ENCODE measurements at regions of chr13 and their contacts with region 1.

Region 1: DNA sequence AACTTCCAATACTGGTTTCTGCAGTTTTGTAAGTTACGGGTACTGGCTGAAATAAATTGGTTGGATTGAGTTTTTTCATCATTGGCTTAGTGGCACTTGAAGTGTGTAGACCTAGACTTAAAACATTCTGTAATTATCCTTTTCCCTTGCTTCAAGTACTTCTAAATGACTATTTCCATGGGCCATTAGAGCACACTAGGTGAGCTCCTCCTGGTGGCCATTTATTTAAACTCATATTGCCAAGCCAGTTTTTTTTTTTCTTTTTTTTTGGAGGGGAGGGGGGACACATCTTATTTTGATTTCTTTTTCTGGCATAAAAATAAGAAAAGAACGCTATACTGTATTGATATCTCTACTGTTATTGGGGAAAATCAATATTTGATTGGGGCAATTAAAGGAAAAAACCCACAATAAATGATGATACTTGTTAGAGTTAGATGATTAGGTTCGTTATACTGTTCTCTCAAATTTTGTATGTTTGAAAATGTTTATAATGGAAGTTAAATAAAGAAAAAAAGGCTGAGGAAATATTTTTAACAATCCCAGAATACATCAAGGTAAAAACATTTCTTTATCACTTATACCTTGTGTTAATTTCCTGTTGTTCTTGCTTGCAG is 82.9 kb downstream of the PDS5B start:
- DNase-seq: peak; percentile 75 to 86 (median 83)
- H3K4me3 ChIP-seq: no peak overlapping the region
- H3K27ac ChIP-seq: no peak overlapping the region
- H3K4me1 ChIP-seq: no peaks in the 10 kb centered on the region
- H3K27me3 ChIP-seq: no peaks in the 10 kb centered on the region

Region 2: GRCh38 chr13:32075170-32075851 is 593.8 kb before region 1 on chr13:
- CTCF ChIA-PET with region 1: no interaction called
- POLR2A ChIA-PET with region 1: no interaction called
- DNase-seq: no peak
- H3K4me3 ChIP-seq: no peak overlapping the region
- H3K27ac ChIP-seq: no peak overlapping the region
- H3K4me1 ChIP-seq: peaks cover 0 to 8% (median 3%) of the 10 kb centered on the region in 4 experiments
- H3K27me3 ChIP-seq: no peaks in the 10 kb centered on the region

Region 3: DNA sequence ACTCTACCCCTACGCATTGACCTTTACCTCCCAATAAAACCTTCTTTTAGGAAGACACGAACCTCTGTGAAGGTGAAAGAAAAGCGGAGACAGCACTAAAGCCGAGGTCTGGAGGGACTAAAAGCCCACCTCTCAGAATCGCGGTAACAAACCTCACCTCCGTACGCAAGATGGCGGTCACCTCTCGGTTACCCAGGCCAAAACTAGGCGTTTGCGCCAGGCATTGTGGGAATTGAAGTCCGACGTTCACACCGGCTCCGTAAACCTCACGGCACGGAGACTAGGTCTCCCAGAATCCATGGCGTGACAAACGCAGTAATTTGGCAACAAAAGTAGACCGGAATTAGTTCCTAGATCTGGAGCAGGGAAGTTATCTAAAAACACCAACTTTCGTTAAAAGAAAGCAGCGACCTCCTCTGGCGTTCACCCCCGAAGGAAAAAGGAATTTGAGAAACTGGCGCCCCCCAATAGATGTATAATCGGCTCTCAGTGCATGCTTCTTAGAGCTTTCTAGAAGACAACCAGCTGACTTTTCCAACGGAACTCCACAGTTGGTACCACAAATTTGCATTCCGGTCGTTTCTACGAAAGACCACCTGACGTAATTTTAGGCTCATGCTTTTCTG is 130.4 kb before region 1 on chr13 and contains the start of gene N4BP2L2:
- CTCF ChIA-PET with region 1: no interaction called
- POLR2A ChIA-PET with region 1: no interaction called
- DNase-seq: peak; percentile 99
- H3K4me3 ChIP-seq: peak within 1 kb of the TSS; percentile 75 to 99 (median 92)
- H3K27ac ChIP-seq: peak within 1 kb of the TSS; percentile 97 to 99
- H3K4me1 ChIP-seq: peaks cover under 1 to 22% (median 12%) of the 10 kb centered on the region in 4 experiments
- H3K27me3 ChIP-seq: no peaks in the 10 kb centered on the region

Region 4: DNA sequence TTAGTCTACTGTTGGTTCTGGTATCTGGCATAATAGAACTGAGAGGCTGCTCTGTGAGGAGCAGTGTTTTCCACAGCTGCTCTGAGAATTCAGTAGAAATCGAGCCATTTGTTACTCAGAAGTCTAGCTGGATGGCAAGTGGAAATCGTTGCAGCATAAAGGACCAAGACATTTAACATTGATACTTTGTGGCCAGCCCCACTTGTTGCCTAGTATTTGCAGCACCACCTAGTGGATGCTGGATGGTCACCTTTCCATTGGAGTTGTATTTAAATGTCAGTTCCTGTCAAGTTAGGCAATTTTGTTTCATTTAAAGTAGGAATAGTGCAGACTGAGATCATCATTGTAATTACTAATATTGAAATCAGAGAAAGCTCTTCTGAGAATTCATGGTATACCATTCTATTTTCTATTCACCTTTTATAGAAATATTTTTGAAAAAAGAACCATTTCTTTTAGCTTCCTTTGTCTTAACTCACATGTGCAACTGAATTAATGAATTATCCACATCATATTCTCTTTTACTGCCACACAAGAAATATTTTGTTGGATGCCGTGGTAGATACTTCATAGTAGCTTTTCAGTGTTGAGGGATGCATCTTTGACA is 18.3 kb before region 1 on chr13:
- CTCF ChIA-PET with region 1: interaction called, 26 read pairs
- POLR2A ChIA-PET with region 1: no interaction called
- DNase-seq: peak; percentile 78 to 83 (median 82)
- H3K4me3 ChIP-seq: no peak overlapping the region
- H3K27ac ChIP-seq: no peak overlapping the region
- H3K4me1 ChIP-seq: peaks cover 0 to 11% (median 7%) of the 10 kb centered on the region in 4 experiments
- H3K27me3 ChIP-seq: no peaks in the 10 kb centered on the region

Region 5: DNA sequence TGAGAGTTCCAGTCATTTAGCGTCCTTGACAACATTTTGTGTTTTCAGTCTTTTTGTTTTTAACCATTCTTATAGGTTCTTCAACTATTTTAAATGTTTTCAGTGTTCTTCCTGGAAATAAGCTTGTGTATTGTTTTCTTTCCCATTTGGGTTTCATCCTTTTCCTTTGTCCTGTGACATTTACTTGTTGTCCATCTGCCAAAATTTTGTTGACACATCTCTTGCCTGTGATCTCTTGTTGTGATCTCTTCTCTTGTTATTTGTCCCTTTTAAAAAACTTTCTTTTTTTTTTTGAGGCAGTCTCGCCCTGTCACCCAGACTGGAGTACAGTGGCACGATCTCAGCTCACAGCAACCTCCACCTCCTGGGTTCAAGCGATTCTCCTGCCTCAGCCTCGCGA is 13.6 kb after region 1 on chr13:
- CTCF ChIA-PET with region 1: interaction called, 31 read pairs
- POLR2A ChIA-PET with region 1: no interaction called
- DNase-seq: no peak
- H3K4me3 ChIP-seq: no peak overlapping the region
- H3K27ac ChIP-seq: no peak overlapping the region
- H3K4me1 ChIP-seq: no peaks in the 10 kb centered on the region
- H3K27me3 ChIP-seq: no peaks in the 10 kb centered on the region

Region 6: GRCh38 chr13:32695602-32696250 is 26.6 kb after region 1 on chr13:
- CTCF ChIA-PET with region 1: interaction called, 13 read pairs
- POLR2A ChIA-PET with region 1: no interaction called
- DNase-seq: peak in 2 of 3 donors; percentile 36 to 49
- H3K4me3 ChIP-seq: no peak overlapping the region
- H3K27ac ChIP-seq: peak overlapping the region in 1 of 2 experiments; percentile 18
- H3K4me1 ChIP-seq: no peaks in the 10 kb centered on the region
- H3K27me3 ChIP-seq: no peaks in the 10 kb centered on the region